ENCODE measurements at regions of chr16 and their contacts with region 1.

Region 1: GRCh38 chr16:9077091-9077809 is 14.2 kb upstream of the HAPSTR1 start:
- DNase-seq: peak; percentile 47
- ATAC-seq: peak; percentile 63
- H3K4me3 ChIP-seq: peak overlapping the region in 1 of 2 experiments; percentile 12; a peak in 1 of 4 replicates
- H3K27ac ChIP-seq: peak overlapping the region; percentile 74
- H3K4me1 ChIP-seq: peaks cover 33 to 74% of the 10 kb centered on the region in 2 experiments
- H3K27me3 ChIP-seq: no peaks in the 10 kb centered on the region
- CTCF ChIP-seq: no peak
- POLR2A ChIP-seq: no peak
- RAD21 ChIP-seq: 0 out of 2 replicates have a peak, but pooled peaks have one; percentile 35

Region 2: GRCh38 chr16:9047686-9048301 is 29.5 kb before region 1 on chr16:
- CTCF ChIA-PET with region 1: interaction called, 14 read pairs
- POLR2A ChIA-PET with region 1: interaction called, 19 read pairs
- RAD21 ChIA-PET with region 1: no interaction called
- intact Hi-C with region 1: no loop called
- DNase-seq: peak; percentile 98
- ATAC-seq: peak; percentile 92
- H3K4me3 ChIP-seq: peak overlapping the region in 1 of 2 experiments; percentile 43; a peak in 2 of 4 replicates
- H3K27ac ChIP-seq: peak overlapping the region; percentile 83
- H3K4me1 ChIP-seq: peaks cover 41 to 48% of the 10 kb centered on the region in 2 experiments
- H3K27me3 ChIP-seq: no peaks in the 10 kb centered on the region
- CTCF ChIP-seq: no peak
- POLR2A ChIP-seq: no peak
- RAD21 ChIP-seq: peak; percentile 37; the same call in 1 of the 2 replicates

Region 3: DNA sequence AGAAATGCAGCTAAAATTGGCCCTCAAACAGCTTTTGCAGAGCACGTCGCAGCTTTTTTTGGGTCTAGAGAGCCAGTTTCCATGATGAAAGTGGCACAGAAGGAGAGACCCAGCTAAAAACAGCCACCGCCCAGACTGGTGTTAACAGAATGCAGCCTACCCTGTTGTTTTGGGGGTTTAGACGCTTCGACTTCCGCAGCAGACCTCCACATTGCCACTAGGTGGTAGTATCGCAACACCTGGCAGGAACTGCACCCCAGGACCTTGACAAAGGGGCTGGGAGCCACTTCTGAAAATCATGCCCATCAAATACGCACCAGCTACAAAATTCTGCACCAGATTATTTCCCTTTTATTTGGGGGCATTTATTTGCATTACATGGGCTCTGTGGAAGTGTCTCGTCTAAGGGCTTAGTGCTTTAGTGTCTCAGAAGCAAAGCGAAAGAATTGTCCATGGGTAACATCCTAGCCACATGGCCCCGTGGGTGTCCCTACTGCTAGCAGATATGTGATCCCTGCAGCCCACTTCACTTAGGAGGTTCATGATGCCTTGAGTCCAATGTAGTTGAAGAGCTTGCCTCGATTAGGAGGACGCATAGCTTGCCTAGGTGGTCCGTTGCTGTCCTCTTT is 181.3 kb after region 1 on chr16:
- CTCF ChIA-PET with region 1: no interaction called
- POLR2A ChIA-PET with region 1: no interaction called
- RAD21 ChIA-PET with region 1: no interaction called
- intact Hi-C with region 1: no loop called
- DNase-seq: peak; percentile 34
- ATAC-seq: peak; percentile 84
- H3K4me3 ChIP-seq: no peak overlapping the region
- H3K27ac ChIP-seq: no peak overlapping the region
- H3K4me1 ChIP-seq: 0 out of 4 replicates have a peak, but pooled peaks cover 0 to 3% of the 10 kb centered on the region in 2 experiments
- H3K27me3 ChIP-seq: peaks cover 15% of the 10 kb centered on the region
- CTCF ChIP-seq: peak; percentile 64 to 93 (median 88)
- POLR2A ChIP-seq: no peak
- RAD21 ChIP-seq: peak; percentile 83

Measured in HCT116 (cell line).